CD8-positive, alpha-beta T cell (primary cell): ENCODE measurements at regions of chr19 and their contacts with region 1.

Region 1: GRCh38 chr19:1652471-1653299 is at the start of gene TCF3:
- DNase-seq: peak; percentile 98 to 99 (median 99)
- ATAC-seq: peak; percentile 90
- H3K4me3 ChIP-seq: peak within 1 kb of the TSS; percentile 66 to 87
- H3K4me3 Mint-ChIP-seq: peak within 1 kb of the TSS; percentile 88
- H3K27ac ChIP-seq: peak within 1 kb of the TSS; percentile 97 to 100
- H3K27ac Mint-ChIP-seq: peak within 1 kb of the TSS; percentile 97
- H3K4me1 ChIP-seq: peaks cover 12% of the 10 kb centered on the region
- H3K4me1 Mint-ChIP-seq: peaks cover 10% of the 10 kb centered on the region
- H3K27me3 ChIP-seq: no peaks in the 10 kb centered on the region
- H3K27me3 Mint-ChIP-seq: no peaks in the 10 kb centered on the region
- CTCF ChIP-seq: no peak
- total RNA-seq, gene TCF3: 67.6 to 69.7 TPM

Region 2: DNA sequence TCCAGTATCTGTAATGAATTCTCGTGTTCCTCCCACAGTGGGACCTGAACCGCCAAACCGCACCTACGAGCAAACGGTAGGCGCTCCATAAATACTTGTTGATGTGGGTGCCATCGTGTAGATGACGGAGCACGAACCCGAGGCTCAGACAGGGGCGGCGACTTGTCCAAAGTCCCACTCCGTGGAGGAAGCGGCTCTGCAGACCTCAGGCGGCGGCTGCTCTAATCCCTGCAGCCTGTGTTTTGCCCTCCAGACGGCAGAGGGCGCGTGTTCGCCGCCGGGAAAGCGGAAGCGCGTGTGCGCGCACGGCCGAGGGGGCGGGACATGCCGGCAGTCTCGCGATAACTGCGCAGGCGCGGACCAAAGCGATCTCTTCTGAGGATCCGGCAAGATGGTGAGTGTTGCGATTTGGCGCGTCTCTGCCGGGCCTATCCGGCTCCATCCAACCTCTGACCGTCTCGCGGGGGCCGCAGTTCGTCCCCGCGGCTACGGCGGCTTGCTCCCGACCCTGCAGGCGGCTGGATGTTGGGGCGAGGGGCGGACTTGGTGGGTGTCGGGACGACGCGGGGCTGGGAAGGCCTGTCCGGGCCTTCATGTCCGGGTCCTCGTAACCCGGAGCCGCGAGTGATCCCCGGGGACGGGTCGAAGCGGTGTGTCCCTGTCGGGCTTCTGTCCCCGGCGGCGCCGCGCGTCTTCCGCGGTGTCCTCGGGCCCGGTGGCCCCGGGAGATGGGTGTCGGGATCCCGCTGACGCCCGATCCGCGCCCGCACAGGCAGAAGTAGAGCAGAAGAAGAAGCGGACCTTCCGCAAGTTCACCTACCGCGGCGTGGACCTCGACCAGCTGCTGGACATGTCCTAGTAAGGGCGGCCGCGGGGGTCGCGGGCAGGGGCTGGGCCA is 214.4 kb before region 1 on chr19 and contains the start of gene RPS15:
- CTCF ChIA-PET with region 1: no interaction called
- POLR2A ChIA-PET with region 1: no interaction called
- intact Hi-C with region 1: loop called in 1 of 2 experiments (anchors 5 kb)
- DNase-seq: peak; percentile 92 to 98 (median 96)
- ATAC-seq: peak; percentile 90
- H3K4me3 ChIP-seq: peak within 1 kb of the TSS; percentile 79 to 95
- H3K4me3 Mint-ChIP-seq: peak within 1 kb of the TSS; percentile 98
- H3K27ac ChIP-seq: peak within 1 kb of the TSS; percentile 82 to 93
- H3K27ac Mint-ChIP-seq: peak within 1 kb of the TSS; percentile 100
- H3K4me1 ChIP-seq: peaks cover 22% of the 10 kb centered on the region
- H3K4me1 Mint-ChIP-seq: peaks cover 21% of the 10 kb centered on the region
- H3K27me3 ChIP-seq: no peaks in the 10 kb centered on the region
- H3K27me3 Mint-ChIP-seq: no peaks in the 10 kb centered on the region
- CTCF ChIP-seq: peak; percentile 95
- total RNA-seq, gene RPS15: 2,066 to 2,071 TPM

Region 3: GRCh38 chr19:1592755-1593500 is 59.8 kb before region 1 on chr19 and contains the start of gene MBD3:
- CTCF ChIA-PET with region 1: interaction called, 4 read pairs
- POLR2A ChIA-PET with region 1: interaction called, 26 read pairs
- intact Hi-C with region 1: loop called (anchors 1 kb)
- DNase-seq: peak; percentile 72 to 95 (median 84)
- ATAC-seq: peak; percentile 89
- H3K4me3 ChIP-seq: peak within 1 kb of the TSS; percentile 80 to 95
- H3K4me3 Mint-ChIP-seq: peak within 1 kb of the TSS; percentile 88
- H3K27ac ChIP-seq: peak within 1 kb of the TSS; percentile 84 to 88
- H3K27ac Mint-ChIP-seq: peak within 1 kb of the TSS; percentile 91
- H3K4me1 ChIP-seq: peaks cover 18% of the 10 kb centered on the region
- H3K4me1 Mint-ChIP-seq: peaks cover 22% of the 10 kb centered on the region
- H3K27me3 ChIP-seq: no peaks in the 10 kb centered on the region
- H3K27me3 Mint-ChIP-seq: no peaks in the 10 kb centered on the region
- CTCF ChIP-seq: no peak
- total RNA-seq, gene MBD3: 31.0 to 37.2 TPM

Region 4: DNA sequence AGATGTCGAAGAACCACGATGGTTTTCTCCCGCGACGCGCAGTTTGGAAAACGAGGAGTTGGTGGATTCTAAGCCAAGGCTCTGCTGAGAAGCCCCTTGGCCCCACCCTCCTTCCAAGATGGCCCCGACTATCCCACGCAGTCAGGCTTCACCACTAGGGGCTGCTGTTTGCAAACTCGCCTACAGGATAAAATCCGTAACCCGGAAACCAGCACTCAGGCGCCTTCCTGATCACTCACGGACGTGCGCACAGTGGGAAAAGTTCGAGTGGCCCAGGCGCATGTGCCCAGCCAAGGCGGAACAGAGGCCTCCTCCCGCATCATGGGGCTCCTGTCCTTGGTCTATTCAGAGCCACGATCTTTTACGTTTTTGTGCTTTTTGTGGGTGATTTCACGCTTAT is 28.2 kb before region 1 on chr19:
- CTCF ChIA-PET with region 1: interaction called, 7 read pairs
- POLR2A ChIA-PET with region 1: no interaction called
- intact Hi-C with region 1: loop called (anchors 2 kb)
- DNase-seq: peak; percentile 22 to 73 (median 61)
- ATAC-seq: peak; percentile 82
- H3K4me3 ChIP-seq: no peak overlapping the region
- H3K4me3 Mint-ChIP-seq: no peak overlapping the region
- H3K27ac ChIP-seq: no peak overlapping the region
- H3K27ac Mint-ChIP-seq: no peak overlapping the region
- H3K4me1 ChIP-seq: no peaks in the 10 kb centered on the region
- H3K4me1 Mint-ChIP-seq: peaks cover 7% of the 10 kb centered on the region
- H3K27me3 ChIP-seq: no peaks in the 10 kb centered on the region
- H3K27me3 Mint-ChIP-seq: no peaks in the 10 kb centered on the region
- CTCF ChIP-seq: peak; percentile 47

Region 5: GRCh38 chr19:1863726-1864480 is 211.2 kb after region 1 on chr19:
- CTCF ChIA-PET with region 1: no interaction called
- POLR2A ChIA-PET with region 1: no interaction called
- intact Hi-C with region 1: loop called in 1 of 2 experiments (anchors 5 kb)
- DNase-seq: peak; percentile 80 to 96 (median 94)
- ATAC-seq: peak; percentile 71
- H3K4me3 ChIP-seq: peak overlapping the region; percentile 84 to 96
- H3K4me3 Mint-ChIP-seq: peak overlapping the region; percentile 80
- H3K27ac ChIP-seq: peak overlapping the region; percentile 71 to 83
- H3K27ac Mint-ChIP-seq: peak overlapping the region; percentile 57
- H3K4me1 ChIP-seq: peaks cover 42% of the 10 kb centered on the region
- H3K4me1 Mint-ChIP-seq: peaks cover 34% of the 10 kb centered on the region
- H3K27me3 ChIP-seq: no peaks in the 10 kb centered on the region
- H3K27me3 Mint-ChIP-seq: no peaks in the 10 kb centered on the region
- CTCF ChIP-seq: no peak

Region 6: DNA sequence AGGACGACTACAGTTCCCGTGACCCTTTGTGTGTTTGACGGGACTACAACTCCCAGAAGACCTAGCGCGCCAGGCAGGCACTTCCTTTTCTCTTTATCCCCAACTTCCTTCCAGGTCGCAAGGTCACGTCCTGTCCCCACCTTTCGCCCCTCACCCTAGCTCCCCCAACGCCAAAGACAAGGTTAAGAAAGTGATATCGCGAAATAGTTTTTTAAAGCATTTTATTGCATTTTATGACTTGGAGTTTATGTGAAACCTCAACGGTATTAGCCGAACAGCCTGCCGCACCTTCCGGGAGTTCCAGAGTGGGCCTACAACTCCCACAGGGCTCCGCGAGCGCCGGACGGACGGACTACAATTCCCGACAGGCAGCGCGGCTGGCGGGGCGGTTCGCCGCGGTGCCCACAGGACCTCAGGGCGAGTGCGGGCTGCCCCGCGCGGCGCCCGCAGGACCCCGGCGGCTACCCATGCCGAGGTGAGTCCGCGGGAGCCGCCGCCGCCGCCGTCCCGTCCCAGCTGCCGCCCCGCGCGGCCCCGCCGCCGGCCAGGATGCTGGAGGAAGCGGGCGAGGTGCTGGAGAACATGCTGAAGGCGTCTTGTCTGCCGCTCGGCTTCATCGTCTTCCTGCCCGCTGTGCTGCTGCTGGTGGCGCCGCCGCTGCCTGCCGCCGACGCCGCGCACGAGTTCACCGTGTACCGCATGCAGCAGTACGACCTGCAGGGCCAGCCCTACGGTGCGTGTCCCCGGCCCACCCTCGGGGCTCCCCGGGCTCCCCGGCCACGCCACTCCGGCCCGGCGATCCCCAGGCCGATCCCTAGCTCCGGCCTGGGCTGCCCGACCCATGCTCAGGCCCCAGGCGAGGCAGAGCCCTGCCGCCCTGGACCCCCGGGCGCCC is 1533.0 kb after region 1 on chr19 and contains the start of gene NCLN:
- CTCF ChIA-PET with region 1: no interaction called
- POLR2A ChIA-PET with region 1: no interaction called
- intact Hi-C with region 1: loop called in 1 of 2 experiments (anchors 5 kb)
- DNase-seq: peak; percentile 91 to 98 (median 94)
- ATAC-seq: peak; percentile 84
- H3K4me3 ChIP-seq: peak within 1 kb of the TSS; percentile 66 to 76
- H3K4me3 Mint-ChIP-seq: peak within 1 kb of the TSS; percentile 92
- H3K27ac ChIP-seq: peak within 1 kb of the TSS; percentile 34 to 84
- H3K27ac Mint-ChIP-seq: peak within 1 kb of the TSS; percentile 89
- H3K4me1 ChIP-seq: peaks cover 67% of the 10 kb centered on the region
- H3K4me1 Mint-ChIP-seq: peaks cover 61% of the 10 kb centered on the region
- H3K27me3 ChIP-seq: no peaks in the 10 kb centered on the region
- H3K27me3 Mint-ChIP-seq: no peaks in the 10 kb centered on the region
- CTCF ChIP-seq: no peak
- total RNA-seq, gene NCLN: 47.3 to 55.7 TPM